ENCODE measurements at regions of chr1 and their contacts with region 1.

Region 1: DNA sequence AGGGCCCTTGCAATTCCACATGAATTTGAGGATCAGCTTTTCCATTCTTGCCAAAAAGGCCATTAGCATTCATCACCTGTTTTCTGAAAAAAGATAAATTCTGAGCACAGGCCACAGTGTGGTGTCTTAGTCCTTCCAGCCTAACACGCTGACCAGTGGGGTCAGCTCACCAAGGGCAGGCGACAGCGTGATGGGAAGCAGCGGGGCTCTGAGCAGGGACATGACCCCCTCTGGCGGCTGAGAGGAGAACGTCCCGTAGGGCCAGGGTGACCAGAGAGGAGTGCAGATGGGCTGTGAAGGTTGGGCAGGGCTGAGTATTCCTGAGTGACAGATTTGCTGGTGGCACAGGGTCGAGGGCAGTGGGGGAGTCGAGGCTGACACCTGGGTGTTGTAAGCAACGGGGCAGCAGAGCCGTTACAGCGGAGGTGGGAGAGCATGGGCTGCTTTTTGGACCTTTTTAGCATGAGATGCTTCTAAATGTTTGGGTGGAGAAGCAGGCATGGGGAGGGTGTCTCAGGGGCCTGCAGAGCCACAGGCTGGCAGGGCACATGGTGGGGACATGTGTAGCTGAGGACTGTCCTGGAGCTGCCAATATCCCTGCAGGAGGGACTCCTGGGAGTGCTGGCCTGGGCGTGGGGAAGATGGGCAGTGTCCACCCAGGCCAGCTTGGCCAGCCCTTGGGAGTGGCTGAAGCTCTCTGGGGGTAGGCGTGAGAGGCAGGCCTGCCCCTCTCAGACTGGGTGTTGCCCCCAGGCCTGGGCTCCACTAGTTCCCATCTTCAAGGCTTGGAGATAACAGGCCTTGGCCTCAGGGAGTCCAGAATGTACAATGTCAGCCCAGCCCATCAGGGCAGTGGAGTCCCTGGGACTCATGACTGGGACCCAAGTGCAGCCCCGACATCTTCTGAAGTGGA is 8.6 kb upstream of the CALML6 start:
- DNase-seq: peak; percentile 76 to 90
- H3K4me3 ChIP-seq: no peak overlapping the region
- H3K4me1 ChIP-seq: peaks cover 18% of the 10 kb centered on the region
- H3K27me3 ChIP-seq: no peaks in the 10 kb centered on the region

Region 2: DNA sequence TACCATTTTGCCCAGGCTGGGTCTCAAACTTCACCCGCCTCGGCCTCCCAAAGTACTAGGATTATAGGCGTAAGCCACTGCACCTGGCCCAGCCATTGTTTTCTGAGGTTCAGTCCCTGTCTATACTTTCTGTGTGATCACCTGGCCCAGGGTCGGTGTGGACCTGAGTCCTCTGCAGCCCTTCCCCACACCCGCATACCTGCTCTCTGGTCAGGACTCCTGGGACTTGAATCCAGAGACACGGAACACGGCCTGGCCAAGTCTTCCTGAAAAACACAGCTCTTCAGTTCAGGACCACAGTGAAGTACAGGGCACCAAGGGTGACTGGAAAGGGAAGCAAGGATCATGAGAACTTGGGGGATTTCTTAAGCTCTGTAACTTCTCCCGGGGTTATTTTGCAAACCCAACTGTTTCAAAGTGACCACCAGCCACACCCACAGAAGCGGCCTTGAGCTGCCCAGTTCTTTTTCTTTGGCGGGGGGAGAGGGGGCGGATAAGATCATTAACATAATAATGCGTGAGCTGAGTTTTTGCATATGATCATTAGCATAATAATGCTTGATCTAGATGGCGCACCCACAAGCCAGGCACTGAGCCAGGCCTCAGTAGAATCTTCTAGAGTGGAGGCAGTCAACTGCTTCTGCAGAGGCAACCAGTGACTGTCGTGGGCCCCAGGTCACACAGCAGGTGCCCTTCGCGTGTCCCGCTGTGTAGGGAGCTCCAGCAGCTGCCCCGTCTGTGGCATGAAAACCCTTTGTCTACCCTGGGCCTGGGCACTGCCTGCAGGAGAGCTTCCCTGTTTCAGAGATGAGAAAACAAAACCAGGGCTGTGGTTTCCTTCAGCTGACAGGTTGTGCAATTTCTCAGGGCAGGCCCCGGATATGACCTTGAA is 126.5 kb before region 1 on chr1:
- in situ Hi-C with region 1: loop called (anchors 10 kb)
- DNase-seq: peak; percentile 90 to 91
- H3K4me3 ChIP-seq: peak overlapping the region; percentile 45
- H3K4me1 ChIP-seq: peaks cover 42% of the 10 kb centered on the region
- H3K27me3 ChIP-seq: no peaks in the 10 kb centered on the region

Region 3: GRCh38 chr1:2019172-2019543 is 112.7 kb after region 1 on chr1 and contains the start of gene GABRD:
- in situ Hi-C with region 1: no loop called
- DNase-seq: peak; percentile 23 to 59
- H3K4me3 ChIP-seq: peak within 1 kb of the TSS; percentile 16; the same call in 1 of the 2 replicates
- H3K4me1 ChIP-seq: peaks cover 2% of the 10 kb centered on the region; the same call in 1 of the 2 replicates
- H3K27me3 ChIP-seq: peaks cover 23% of the 10 kb centered on the region

Measured in HAP-1 (cell line).